SK-N-SH (cell line): ENCODE measurements at regions of chr1 and their contacts with region 1.

Region 1: DNA sequence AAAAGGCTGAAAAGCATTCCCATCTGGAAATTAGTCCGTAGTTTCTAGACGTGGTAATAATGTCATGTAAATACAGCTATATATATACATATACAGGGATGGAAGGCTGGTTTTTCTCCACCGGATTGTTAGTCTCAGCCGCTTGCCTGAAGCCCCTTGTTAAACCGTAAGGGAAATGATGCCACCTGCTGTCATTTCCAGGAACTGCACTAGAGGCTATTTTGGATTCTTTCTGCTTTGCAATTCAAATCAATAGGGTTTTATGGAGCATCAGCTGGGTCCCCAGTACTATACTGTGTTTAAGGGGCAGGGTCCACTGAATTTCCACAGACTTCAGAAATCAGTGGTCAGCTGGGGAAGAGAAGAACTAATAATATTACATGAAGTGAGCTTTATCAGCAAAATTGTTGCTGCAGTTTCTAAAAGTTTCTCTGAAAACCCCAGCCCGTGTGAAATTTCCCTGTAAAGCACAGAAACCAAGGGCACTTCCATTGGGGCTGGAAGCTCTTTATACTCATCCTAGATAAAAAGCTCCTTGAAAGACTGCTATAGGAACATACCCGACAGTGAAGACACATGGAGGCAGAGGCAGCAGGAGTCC is 33.8 kb upstream of the MPZL1 start:
- DNase-seq: peak; percentile 76
- H3K4me3 ChIP-seq: no peak overlapping the region; a peak in 1 of 4 replicates
- H3K27ac ChIP-seq: no peak overlapping the region
- H3K4me1 ChIP-seq: peaks cover 8 to 17% of the 10 kb centered on the region in 2 experiments; a peak in 3 of 4 replicates
- H3K27me3 ChIP-seq: no peaks in the 10 kb centered on the region
- CTCF ChIP-seq: peak; percentile 95
- EP300 ChIP-seq: no peak
- RAD21 ChIP-seq: peak; percentile 96

Region 2: GRCh38 chr1:167082511-167083027 is 605.5 kb before region 1 on chr1:
- CTCF ChIA-PET with region 1: no interaction called
- POLR2A ChIA-PET with region 1: no interaction called
- DNase-seq: no peak
- H3K4me3 ChIP-seq: no peak overlapping the region
- H3K27ac ChIP-seq: no peak overlapping the region
- H3K4me1 ChIP-seq: peaks cover 0 to 11% of the 10 kb centered on the region in 2 experiments; a peak in 1 of 4 replicates
- H3K27me3 ChIP-seq: no peaks in the 10 kb centered on the region; the same call in 1 of the 2 replicates
- CTCF ChIP-seq: no peak
- EP300 ChIP-seq: no peak
- RAD21 ChIP-seq: no peak

Region 3: GRCh38 chr1:167553136-167554027 is 134.6 kb before region 1 on chr1 and contains the start of gene CREG1:
- CTCF ChIA-PET with region 1: interaction called, 23 read pairs
- POLR2A ChIA-PET with region 1: no interaction called
- DNase-seq: peak; percentile 98
- H3K4me3 ChIP-seq: peak within 1 kb of the TSS; percentile 67 to 71
- H3K27ac ChIP-seq: peak within 1 kb of the TSS in 1 of 2 experiments; percentile 51; a peak in 2 of 4 replicates
- H3K4me1 ChIP-seq: peaks cover 0 to 8% of the 10 kb centered on the region in 2 experiments; a peak in 2 of 4 replicates
- H3K27me3 ChIP-seq: no peaks in the 10 kb centered on the region
- CTCF ChIP-seq: no peak
- EP300 ChIP-seq: no peak
- RAD21 ChIP-seq: no peak
- polyA plus RNA-seq, gene CREG1: 26.1 and 37.0 TPM in 2 replicates

Region 4: DNA sequence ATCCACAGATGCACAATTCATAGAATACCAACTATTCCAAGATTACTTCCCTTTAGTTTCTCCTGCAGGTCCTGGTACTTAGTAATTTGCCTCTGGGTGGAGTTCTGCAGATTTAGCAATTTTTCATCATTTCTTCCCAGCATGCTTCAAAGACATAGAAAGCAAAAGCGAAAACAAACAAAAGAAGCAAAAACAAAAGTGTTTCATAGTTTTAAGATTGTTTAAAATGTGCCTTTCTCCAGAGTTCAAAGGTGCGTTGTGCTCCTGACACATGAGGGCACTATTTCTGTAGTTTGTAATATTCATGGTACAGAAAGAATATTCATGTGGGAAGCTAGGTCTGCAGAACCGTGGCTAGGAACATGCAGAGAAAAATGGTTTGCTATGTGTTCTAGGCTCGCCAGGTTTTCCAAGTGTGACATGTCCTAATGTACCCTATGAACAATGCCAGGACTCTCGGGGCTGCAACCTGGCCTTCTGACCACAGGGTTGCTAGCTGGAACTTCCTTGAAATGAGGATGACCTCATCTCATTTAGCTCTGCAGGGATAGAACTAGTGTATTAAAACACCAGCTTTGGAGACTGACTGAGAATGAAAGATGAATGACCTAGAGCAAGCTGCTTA is 88.0 kb before region 1 on chr1:
- CTCF ChIA-PET with region 1: interaction called, 80 read pairs
- POLR2A ChIA-PET with region 1: interaction called, 3 read pairs
- DNase-seq: peak; percentile 38
- H3K4me3 ChIP-seq: no peak overlapping the region
- H3K27ac ChIP-seq: no peak overlapping the region
- H3K4me1 ChIP-seq: peaks cover 0 to 6% of the 10 kb centered on the region in 2 experiments; a peak in 1 of 4 replicates
- H3K27me3 ChIP-seq: no peaks in the 10 kb centered on the region; the same call in 1 of the 2 replicates
- CTCF ChIP-seq: peak; percentile 75
- EP300 ChIP-seq: no peak
- RAD21 ChIP-seq: peak; percentile 79

Region 5: GRCh38 chr1:167676205-167676915 is 11.7 kb before region 1 on chr1:
- CTCF ChIA-PET with region 1: interaction called, 13 read pairs
- POLR2A ChIA-PET with region 1: no interaction called
- DNase-seq: no peak
- H3K4me3 ChIP-seq: no peak overlapping the region
- H3K27ac ChIP-seq: no peak overlapping the region
- H3K4me1 ChIP-seq: peaks cover 0 to 8% of the 10 kb centered on the region in 2 experiments; a peak in 1 of 4 replicates
- H3K27me3 ChIP-seq: no peaks in the 10 kb centered on the region; the same call in 1 of the 2 replicates
- CTCF ChIP-seq: no peak
- EP300 ChIP-seq: no peak
- RAD21 ChIP-seq: no peak

Region 6: GRCh38 chr1:167715157-167715999 is 27.4 kb after region 1 on chr1:
- CTCF ChIA-PET with region 1: interaction called, 20 read pairs
- POLR2A ChIA-PET with region 1: no interaction called
- DNase-seq: peak; percentile 70
- H3K4me3 ChIP-seq: peak overlapping the region; percentile 76 to 83
- H3K27ac ChIP-seq: peak overlapping the region; percentile 70 to 87
- H3K4me1 ChIP-seq: peaks cover 0 to 5% of the 10 kb centered on the region in 2 experiments; a peak in 1 of 4 replicates
- H3K27me3 ChIP-seq: peaks cover 8% of the 10 kb centered on the region; the same call in 1 of the 2 replicates
- CTCF ChIP-seq: peak; percentile 94
- EP300 ChIP-seq: no peak
- RAD21 ChIP-seq: peak; percentile 24